Activated naive CD4-positive, alpha-beta T cell treated with anti-CD3 and anti-CD28 coated beads for 36 hours (primary cell): ENCODE measurements at regions of chrX and their contacts with region 1.

Region 1: GRCh38 chrX:27186664-27187063 is 276.5 kb downstream of the PPP4R3C start:
- DNase-seq: peak; percentile 36
- H3K4me3 Mint-ChIP-seq: no peak overlapping the region
- H3K27ac Mint-ChIP-seq: no peak overlapping the region
- H3K4me1 Mint-ChIP-seq: no peaks in the 10 kb centered on the region
- H3K27me3 Mint-ChIP-seq: no peaks in the 10 kb centered on the region

Region 2: DNA sequence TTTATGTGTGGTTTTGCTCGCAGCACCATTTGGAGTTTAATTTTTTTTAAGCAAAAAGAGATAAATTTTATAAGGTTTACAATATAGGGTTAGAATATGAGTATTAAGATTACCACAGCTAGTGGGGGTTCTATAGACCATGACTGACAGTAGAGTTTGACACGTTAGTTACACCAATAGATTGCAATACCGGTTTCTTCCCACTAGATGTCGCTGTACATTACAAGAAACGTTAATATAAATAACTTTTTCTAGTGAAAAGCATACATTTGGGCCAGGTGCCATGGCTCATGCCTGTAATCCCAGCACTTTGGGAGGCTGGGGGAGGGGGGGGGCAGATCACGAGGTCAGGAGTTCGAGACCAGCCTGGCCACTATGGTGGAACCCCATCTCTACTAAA is 537.1 kb before region 1 on chrX:
- CTCF ChIA-PET with region 1: no interaction called
- intact Hi-C with region 1: loop called (anchors 2 kb)
- DNase-seq: no peak
- H3K4me3 Mint-ChIP-seq: no peak overlapping the region
- H3K27ac Mint-ChIP-seq: no peak overlapping the region
- H3K4me1 Mint-ChIP-seq: no peaks in the 10 kb centered on the region
- H3K27me3 Mint-ChIP-seq: no peaks in the 10 kb centered on the region

Region 3: DNA sequence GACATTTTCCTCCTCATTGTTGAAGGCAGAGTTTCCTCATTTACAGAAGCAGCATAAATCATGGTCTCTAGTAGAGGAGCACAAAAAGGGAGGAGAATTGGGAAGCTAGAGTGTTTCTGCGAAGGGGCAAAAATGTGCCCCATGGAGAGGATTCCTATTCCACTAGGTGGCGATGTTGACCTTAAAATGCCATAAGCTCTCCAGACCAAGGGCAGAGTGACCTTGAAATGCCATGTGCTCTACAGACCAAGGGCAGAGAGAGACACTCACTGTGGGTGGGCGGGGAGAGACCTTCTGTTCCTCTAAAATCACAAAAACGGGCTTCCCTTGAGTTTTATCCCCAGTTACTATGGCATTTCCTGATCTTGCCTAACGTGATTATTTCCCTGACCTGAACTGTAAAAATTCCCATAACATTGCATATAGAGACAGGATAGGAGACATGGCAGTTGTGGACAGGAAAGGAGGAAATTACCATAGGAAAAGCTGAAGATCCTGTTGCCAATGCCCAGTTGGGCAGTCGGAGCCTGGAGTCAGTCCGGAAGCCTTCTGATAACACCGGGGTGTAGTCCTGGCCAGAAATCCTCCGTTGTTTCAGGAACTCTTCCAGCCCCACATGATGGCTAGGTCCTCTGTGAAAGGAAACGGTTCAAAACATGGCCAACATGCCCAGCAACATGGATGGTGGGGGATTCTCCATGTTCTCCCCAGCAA is 403.0 kb before region 1 on chrX:
- CTCF ChIA-PET with region 1: no interaction called
- intact Hi-C with region 1: loop called (anchors 1 kb)
- DNase-seq: peak; percentile 4
- H3K4me3 Mint-ChIP-seq: no peak overlapping the region
- H3K27ac Mint-ChIP-seq: no peak overlapping the region
- H3K4me1 Mint-ChIP-seq: no peaks in the 10 kb centered on the region
- H3K27me3 Mint-ChIP-seq: no peaks in the 10 kb centered on the region